GM12878 (cell line): ENCODE measurements at regions of chr14 and their contacts with region 1.

Region 1: GRCh38 chr14:20059745-20060144 is at the start of gene OR4L1:
- DNase-seq: no peak
- ATAC-seq: no peak
- H3K4me3 ChIP-seq: no peak within 1 kb of the TSS
- H3K27ac ChIP-seq: no peak within 1 kb of the TSS
- H3K4me1 ChIP-seq: no peaks in the 10 kb centered on the region
- H3K27me3 ChIP-seq: no peaks in the 10 kb centered on the region
- CTCF ChIP-seq: no peak
- EP300 ChIP-seq: no peak
- POLR2A ChIP-seq: no peak
- RAD21 ChIP-seq: no peak
- polyA plus RNA-seq, gene OR4L1: not detected

Region 2: DNA sequence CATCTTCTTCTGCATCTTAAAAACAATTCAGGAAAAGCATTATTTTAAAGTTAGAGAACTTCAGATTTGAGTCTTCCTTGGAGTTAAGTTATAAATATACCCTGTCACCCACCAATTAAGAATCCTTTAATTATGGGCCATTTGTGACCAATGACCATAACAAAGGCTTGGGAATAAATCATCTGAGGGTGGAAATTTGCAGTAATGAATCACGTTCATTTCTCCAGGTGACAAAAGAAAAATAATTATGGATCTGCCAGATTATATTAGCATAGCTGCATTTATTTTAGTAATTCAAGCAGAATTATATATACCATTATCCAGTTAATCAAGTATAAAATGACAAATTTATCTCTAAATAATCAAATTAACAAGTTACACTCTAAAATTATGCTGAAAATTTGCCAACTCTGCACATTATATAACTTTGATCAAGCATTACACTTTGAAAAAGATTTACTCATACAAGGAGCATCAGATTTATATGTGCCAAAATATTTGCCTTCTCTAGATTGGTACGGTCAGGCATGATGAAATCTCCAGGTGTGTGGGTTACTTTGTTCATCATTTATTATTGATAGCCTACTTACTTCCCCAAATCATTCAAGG is 40.4 kb before region 1 on chr14 and contains the start of gene OR4K14:
- CTCF ChIA-PET with region 1: no interaction called
- POLR2A ChIA-PET with region 1: no interaction called
- RAD21 ChIA-PET with region 1: no interaction called
- SMC1A ChIA-PET with region 1: no interaction called
- in situ Hi-C with region 1: no loop called
- intact Hi-C with region 1: loop called (anchors 5 kb)
- DNase-seq: no peak
- ATAC-seq: no peak
- H3K4me3 ChIP-seq: no peak within 1 kb of the TSS
- H3K27ac ChIP-seq: no peak within 1 kb of the TSS
- H3K4me1 ChIP-seq: no peaks in the 10 kb centered on the region
- H3K27me3 ChIP-seq: no peaks in the 10 kb centered on the region
- CTCF ChIP-seq: no peak
- EP300 ChIP-seq: no peak
- POLR2A ChIP-seq: no peak
- RAD21 ChIP-seq: no peak
- polyA plus RNA-seq, gene OR4K14: not detected